Activated CD8-positive, alpha-beta memory T cell treated with anti-CD3 and anti-CD28 coated beads, Interleukin-2, amount 10 ng/mL, durations not matched to agents 7 days and 5 days (primary cell): ENCODE measurements at regions of chr10 and their contacts with region 1.

Region 1: GRCh38 chr10:73772280-73773151 is 9.3 kb upstream of the CHCHD1 start:
- DNase-seq: peak; percentile 89
- ATAC-seq: peak; percentile 74
- H3K4me3 Mint-ChIP-seq: peak overlapping the region; percentile 94
- H3K27ac Mint-ChIP-seq: peak overlapping the region; percentile 92
- H3K4me1 Mint-ChIP-seq: peaks cover 46% of the 10 kb centered on the region
- H3K27me3 Mint-ChIP-seq: no peaks in the 10 kb centered on the region

Region 2: GRCh38 chr10:73759512-73760115 is 12.9 kb before region 1 on chr10:
- CTCF ChIA-PET with region 1: interaction called, 28 read pairs
- DNase-seq: peak; percentile 66
- ATAC-seq: peak; percentile 73
- H3K4me3 Mint-ChIP-seq: peak overlapping the region; percentile 26
- H3K27ac Mint-ChIP-seq: peak overlapping the region; percentile 84
- H3K4me1 Mint-ChIP-seq: peaks cover 71% of the 10 kb centered on the region
- H3K27me3 Mint-ChIP-seq: no peaks in the 10 kb centered on the region

Region 3: DNA sequence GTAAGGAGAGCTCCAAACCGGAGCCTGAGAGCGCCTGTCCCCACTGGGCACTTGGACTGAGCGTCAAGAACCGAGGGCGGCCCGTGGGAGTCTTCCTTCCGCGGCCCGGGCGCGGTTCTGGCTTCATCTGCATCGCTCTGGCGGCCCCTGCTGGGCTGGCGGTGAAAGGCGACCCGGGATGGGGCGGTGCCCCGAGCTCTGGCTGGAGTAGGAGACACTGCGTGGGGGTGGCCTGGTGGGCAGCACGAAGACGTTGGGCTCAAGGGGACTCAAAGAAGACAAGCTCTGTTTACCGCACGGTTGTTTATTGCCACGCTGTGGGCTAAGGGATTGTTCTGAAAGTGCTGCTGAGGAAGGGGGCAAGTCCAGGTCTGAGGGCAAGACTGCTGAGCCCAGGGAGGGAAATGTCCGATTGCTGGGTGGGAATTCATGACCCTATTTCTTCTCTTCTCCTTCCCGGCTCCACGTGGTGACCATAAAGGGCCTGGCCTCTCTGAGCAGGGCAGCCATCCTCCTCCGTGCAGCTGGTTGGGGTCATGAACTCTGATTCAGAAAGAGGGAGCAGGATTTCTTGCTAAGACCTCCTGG is 168.2 kb after region 1 on chr10:
- CTCF ChIA-PET with region 1: no interaction called
- DNase-seq: peak; percentile 88
- ATAC-seq: peak; percentile 100
- H3K4me3 Mint-ChIP-seq: no peak overlapping the region
- H3K27ac Mint-ChIP-seq: peak overlapping the region; percentile 80
- H3K4me1 Mint-ChIP-seq: peaks cover 12% of the 10 kb centered on the region
- H3K27me3 Mint-ChIP-seq: peaks cover 11% of the 10 kb centered on the region

Region 4: GRCh38 chr10:73962386-73962785 is 189.9 kb after region 1 on chr10:
- CTCF ChIA-PET with region 1: no interaction called
- DNase-seq: no peak
- ATAC-seq: no peak
- H3K4me3 Mint-ChIP-seq: no peak overlapping the region
- H3K27ac Mint-ChIP-seq: no peak overlapping the region
- H3K4me1 Mint-ChIP-seq: peaks cover 22% of the 10 kb centered on the region
- H3K27me3 Mint-ChIP-seq: no peaks in the 10 kb centered on the region